Heart right ventricle (tissue), 16 donors: ENCODE measurements at regions of chr16 and their contacts with region 1.

Region 1: DNA sequence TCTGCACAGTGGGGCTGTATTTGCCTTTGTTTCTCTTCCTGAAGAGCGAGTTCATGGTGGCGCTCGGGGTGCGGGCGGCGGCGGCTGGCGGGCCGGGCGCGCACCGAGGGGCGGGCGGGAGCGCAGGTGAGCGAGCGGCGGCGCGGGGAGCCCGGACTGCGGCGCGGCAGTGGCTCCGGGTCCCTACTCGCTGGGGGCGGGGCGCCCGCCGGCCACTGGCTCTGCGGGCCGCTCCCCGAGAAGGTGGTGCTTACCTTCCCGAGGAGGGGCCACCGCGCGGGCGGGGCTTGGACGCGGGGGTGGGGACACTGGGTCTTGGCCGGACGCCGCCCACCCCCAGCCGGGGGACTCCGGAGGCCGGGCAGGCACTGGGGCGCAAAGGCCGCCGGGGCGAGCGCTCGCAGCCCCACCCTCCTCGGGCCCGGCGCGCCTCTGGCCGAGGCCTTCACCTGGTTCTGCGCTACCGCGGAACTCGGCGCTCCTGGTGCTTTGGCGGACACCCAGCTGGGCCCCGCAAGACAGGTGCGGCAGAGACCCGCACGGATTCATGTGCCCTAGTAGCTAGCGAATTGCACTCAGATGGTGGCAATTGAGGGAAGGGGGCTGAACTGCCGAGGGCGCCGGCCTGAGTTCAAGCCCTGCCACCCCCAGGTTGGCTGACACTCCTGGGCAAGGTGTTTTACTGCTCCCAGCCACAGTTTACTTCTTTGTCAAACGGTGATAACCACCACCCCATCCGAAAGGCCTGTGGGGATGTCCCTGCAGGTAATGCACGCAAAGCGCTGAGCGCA is at the start of gene PPL:
- DNase-seq: peak; percentile 60 to 68
- ATAC-seq: peak; percentile 46 to 75 (median 56)
- H3K4me3 ChIP-seq: peak within 1 kb of the TSS; percentile 36 to 59 (median 50)
- H3K27ac ChIP-seq: peak within 1 kb of the TSS in 6 of 10 donors; percentile 16 to 49 (median 27)
- H3K4me1 ChIP-seq: peaks cover 8 to 23% (median 18%) of the 10 kb centered on the region in 9 donors
- H3K27me3 ChIP-seq: peaks cover 0 to 48% (median 18%) of the 10 kb centered on the region in 7 donors
- CTCF ChIP-seq: no peak
- total RNA-seq, gene PPL: 5.5 to 19.3 (median 7.7) TPM

Region 2: GRCh38 chr16:4682616-4683254 is 254.5 kb before region 1 on chr16:
- intact Hi-C with region 1: no loop called
- DNase-seq: peak in 1 of 2 donors; percentile 18
- ATAC-seq: no peak
- H3K4me3 ChIP-seq: no peak overlapping the region
- H3K27ac ChIP-seq: peak overlapping the region in 1 of 10 donors; percentile 11
- H3K4me1 ChIP-seq: peaks cover under 1 to 52% (median 26%) of the 10 kb centered on the region in 9 donors
- H3K27me3 ChIP-seq: no peaks in the 10 kb centered on the region
- CTCF ChIP-seq: peak in 7 of 9 donors; percentile 11 to 50 (median 33)

Region 3: DNA sequence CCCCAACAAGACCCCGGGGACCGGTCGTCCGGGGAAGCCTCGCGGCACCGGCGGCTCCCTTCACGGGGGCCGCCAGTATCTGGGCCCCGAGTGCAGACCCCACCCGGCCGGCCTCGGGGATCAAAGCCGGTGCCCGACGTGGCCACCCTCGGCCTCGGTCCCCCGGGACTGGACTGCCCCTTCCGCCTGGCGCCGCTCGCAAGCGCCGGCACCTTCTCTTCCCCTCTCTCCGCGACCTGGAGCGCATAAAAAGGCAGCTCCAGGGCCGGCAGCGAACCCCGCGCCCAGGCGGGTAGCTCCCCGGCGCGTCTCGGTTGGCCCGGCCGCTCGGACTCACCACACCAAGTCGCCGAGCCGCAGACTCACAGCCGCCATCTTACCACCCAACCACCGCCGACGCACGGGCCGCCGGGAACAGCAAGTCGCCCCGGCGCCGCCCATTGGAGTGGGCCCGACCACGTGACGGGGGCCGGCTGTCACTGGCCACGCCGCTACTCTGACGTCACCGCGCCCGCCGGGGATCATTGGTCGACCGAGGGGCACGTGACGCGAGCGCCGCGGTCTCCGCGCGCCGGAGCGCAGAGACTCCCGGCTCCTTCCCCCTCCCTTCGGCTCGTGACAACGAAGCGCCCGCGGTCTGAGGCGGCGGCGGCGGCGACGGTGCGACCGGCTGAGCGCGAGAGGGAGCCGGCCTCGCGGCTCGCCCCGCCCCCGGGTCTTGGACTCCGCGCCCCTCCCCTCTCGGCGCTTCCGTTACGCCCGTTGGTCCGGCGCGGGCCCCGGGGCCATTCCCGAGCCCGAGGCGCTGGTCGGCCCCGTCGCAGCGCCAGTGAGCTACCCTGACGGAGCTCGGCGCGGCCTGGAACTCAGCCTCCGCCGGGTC is 90.1 kb before region 1 on chr16 and contains the starts of genes GLYR1 and UBN1:
- intact Hi-C with region 1: loop called in 1 of 10 experiments (anchors 5 kb)
- DNase-seq: peak; percentile 99 to 100
- ATAC-seq: peak; percentile 97 to 99 (median 98)
- H3K4me3 ChIP-seq: peak within 1 kb of the TSS; percentile 80 to 100 (median 96)
- H3K27ac ChIP-seq: peak within 1 kb of the TSS; percentile 85 to 99 (median 96)
- H3K4me1 ChIP-seq: peaks cover 17 to 65% (median 56%) of the 10 kb centered on the region in 9 donors
- H3K27me3 ChIP-seq: no peaks in the 10 kb centered on the region
- CTCF ChIP-seq: no peak
- total RNA-seq, gene GLYR1: 70.9 to 105 (median 75.1) TPM
- total RNA-seq, gene UBN1: 28.1 to 56.9 (median 31.1) TPM

Region 4: DNA sequence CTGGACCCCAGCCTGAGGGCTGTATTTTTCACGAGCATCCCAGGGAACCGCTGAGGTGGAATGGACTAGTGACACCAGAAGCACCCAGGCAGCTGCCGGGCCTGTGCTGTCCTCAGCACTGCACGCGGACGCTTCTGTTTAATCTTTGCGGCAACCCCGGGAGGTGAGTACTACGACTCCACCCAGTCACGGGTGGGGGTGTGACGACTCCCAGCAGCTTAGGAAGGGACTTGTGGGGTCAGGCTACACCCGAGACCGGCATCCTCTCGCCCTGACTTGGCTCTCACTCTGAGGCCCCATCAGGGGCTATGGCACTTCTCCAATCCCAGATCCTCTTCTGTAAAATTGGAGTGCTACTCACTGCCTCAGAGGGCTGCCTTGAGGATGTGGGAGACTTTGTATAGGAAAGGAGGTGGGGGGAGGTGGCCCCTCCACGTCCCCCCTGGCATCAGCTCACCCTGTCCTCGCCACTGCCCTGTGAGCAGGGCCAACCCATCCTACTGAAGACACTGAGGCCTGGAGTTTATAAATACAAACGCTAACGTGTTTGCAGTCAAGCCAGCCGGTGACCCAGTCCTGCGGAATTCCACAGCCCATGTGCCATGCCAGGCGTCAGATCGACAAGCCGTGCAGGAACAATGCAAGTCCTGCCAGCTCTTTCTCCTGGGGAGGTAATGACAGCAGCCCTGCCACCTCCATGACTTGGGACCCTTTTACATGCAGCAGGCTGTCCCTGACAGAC is 44.7 kb before region 1 on chr16:
- intact Hi-C with region 1: loop called in 2 of 10 experiments (anchors 5 to 10 kb)
- DNase-seq: peak; percentile 40 to 42
- ATAC-seq: peak; percentile 41 to 84 (median 70)
- H3K4me3 ChIP-seq: no peak overlapping the region
- H3K27ac ChIP-seq: peak overlapping the region in 7 of 10 donors; percentile 17 to 64 (median 43)
- H3K4me1 ChIP-seq: peaks cover 8 to 20% (median 14%) of the 10 kb centered on the region in 9 donors
- H3K27me3 ChIP-seq: no peaks in the 10 kb centered on the region
- CTCF ChIP-seq: no peak

Region 5: DNA sequence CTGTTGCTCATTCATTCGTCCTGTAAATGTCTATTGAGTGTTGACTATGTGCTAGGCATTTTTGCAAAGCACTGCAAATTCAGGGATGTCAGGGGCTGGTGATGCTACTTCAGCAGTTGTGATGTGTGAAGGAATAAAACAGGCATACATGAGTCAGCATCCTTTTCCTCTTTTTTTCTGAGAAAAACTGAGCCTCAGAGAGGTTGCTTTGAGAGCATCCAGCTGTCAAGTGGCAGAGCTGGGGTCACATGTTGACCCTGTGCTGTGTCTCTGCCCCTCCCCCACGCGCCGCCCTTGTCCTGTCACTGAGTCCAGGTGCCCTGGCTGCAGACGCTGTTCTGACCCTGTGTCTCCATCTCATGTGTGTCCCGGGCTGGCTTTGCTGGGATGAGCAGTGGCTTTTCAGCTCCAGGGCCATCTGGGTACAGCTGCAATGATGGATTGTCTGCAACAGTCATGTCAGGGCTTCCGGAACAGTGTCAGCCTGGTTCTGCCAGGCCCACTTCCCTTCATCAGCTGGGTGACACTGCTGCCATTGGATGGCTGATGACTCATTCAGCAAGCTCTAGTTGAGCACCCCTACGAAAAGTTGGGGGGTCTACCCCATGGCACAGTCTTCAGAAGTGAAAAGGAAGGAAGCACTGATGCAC is 35.9 kb after region 1 on chr16:
- intact Hi-C with region 1: no loop called
- DNase-seq: no peak
- ATAC-seq: no peak
- H3K4me3 ChIP-seq: no peak overlapping the region
- H3K27ac ChIP-seq: no peak overlapping the region
- H3K4me1 ChIP-seq: peaks cover 0 to 4% (median 0%) of the 10 kb centered on the region in 9 donors
- H3K27me3 ChIP-seq: peaks cover 0 to 9% (median 0%) of the 10 kb centered on the region in 7 donors
- CTCF ChIP-seq: no peak

Region 6: DNA sequence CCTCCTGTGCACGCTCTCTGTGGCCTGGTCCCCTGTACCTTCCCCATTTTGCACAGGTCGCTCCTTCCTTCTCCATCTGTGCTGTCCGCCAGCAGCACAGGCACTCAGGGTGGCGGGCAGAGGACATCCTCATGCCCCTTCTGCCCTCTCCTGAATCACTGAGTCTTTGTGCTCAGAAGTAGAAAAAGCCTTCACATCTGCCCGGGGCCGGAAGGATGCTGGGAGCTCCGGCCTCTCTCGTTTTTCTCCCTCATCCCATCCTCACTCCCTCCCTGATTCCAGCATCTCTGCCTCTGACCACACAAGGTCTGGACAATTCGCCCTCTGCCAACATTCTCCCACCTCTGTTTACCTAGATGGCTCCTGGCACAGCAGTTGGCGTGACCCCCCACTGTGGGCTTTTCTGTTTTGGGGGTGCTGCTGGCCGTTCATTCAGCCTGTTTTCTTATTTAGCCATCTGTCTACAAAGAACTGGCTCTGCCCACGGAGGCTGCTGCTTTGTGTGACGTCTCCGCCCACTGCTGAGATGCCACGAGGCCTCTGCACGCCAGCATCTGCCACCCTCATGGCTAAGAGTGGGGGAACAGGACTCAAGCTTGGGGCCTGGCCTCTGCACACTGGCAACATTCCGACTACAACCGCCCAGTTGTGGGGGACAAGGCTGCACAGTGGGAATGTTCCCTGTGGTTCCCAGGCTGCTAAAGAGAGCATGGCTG is 57.7 kb after region 1 on chr16:
- intact Hi-C with region 1: no loop called
- DNase-seq: no peak
- ATAC-seq: no peak
- H3K4me3 ChIP-seq: no peak overlapping the region
- H3K27ac ChIP-seq: no peak overlapping the region
- H3K4me1 ChIP-seq: no peaks in the 10 kb centered on the region
- H3K27me3 ChIP-seq: peaks cover 0 to 23% (median 11%) of the 10 kb centered on the region in 7 donors
- CTCF ChIP-seq: no peak